Body of pancreas (tissue), 4 donors: ENCODE measurements at regions of chr1 and their contacts with region 1.

Region 1: GRCh38 chr1:67760030-67760821 is 73.0 kb downstream of the GNG12 start:
- DNase-seq: peak; percentile 66 to 86 (median 78)
- ATAC-seq: peak; percentile 94
- H3K4me3 ChIP-seq: no peak overlapping the region
- H3K27ac ChIP-seq: peak overlapping the region; percentile 46 to 81 (median 68)
- H3K4me1 ChIP-seq: peaks cover 12% of the 10 kb centered on the region
- H3K27me3 ChIP-seq: no peaks in the 10 kb centered on the region
- CTCF ChIP-seq: peak; percentile 58 to 91 (median 85)
- POLR2A ChIP-seq: no peak

Region 2: GRCh38 chr1:67489643-67490042 is 270.6 kb before region 1 on chr1:
- intact Hi-C with region 1: no loop called
- DNase-seq: peak in 2 of 4 donors; percentile 7 to 11
- ATAC-seq: no peak
- H3K4me3 ChIP-seq: no peak overlapping the region
- H3K27ac ChIP-seq: no peak overlapping the region
- H3K4me1 ChIP-seq: no peaks in the 10 kb centered on the region
- H3K27me3 ChIP-seq: no peaks in the 10 kb centered on the region
- CTCF ChIP-seq: peak in 3 of 7 experiments; percentile 13 to 28 (median 18)
- POLR2A ChIP-seq: no peak

Region 3: DNA sequence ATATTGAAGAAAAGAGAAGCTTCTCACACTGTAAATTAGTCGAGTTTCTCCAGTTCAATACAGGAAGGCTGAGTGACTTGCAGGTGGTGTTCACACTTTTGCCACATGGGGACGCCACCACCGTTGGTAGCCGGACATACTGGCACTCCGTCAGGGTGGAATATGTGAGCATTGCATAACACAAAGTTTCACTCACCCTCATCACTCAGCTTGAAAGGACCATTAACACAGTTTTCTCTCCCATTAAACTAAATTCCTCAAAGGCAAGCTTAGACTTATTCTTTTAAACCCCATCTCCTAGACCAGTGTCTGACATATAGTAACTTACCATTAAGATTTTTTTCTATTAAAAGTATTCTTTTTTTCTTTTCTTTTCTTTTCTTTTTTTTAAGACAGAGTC is 224.8 kb before region 1 on chr1:
- intact Hi-C with region 1: loop called (anchors 5 kb)
- DNase-seq: peak; percentile 83 to 85 (median 84)
- ATAC-seq: peak; percentile 82
- H3K4me3 ChIP-seq: no peak overlapping the region
- H3K27ac ChIP-seq: no peak overlapping the region
- H3K4me1 ChIP-seq: peaks cover 18% of the 10 kb centered on the region
- H3K27me3 ChIP-seq: no peaks in the 10 kb centered on the region
- CTCF ChIP-seq: peak; percentile 61 to 95 (median 93)
- POLR2A ChIP-seq: no peak

Region 4: GRCh38 chr1:67723620-67724019 is 36.6 kb before region 1 on chr1:
- intact Hi-C with region 1: no loop called
- DNase-seq: no peak
- ATAC-seq: peak; percentile 47
- H3K4me3 ChIP-seq: no peak overlapping the region
- H3K27ac ChIP-seq: peak overlapping the region in 1 of 4 donors; percentile 43
- H3K4me1 ChIP-seq: peaks cover 18% of the 10 kb centered on the region
- H3K27me3 ChIP-seq: no peaks in the 10 kb centered on the region
- CTCF ChIP-seq: no peak
- POLR2A ChIP-seq: no peak